ENCODE measurements at regions of chr12 and their contacts with region 1.

Region 1: GRCh38 chr12:79597910-79598309 is 92.9 kb downstream of the PAWR start:
- DNase-seq: no peak
- H3K4me3 ChIP-seq: no peak overlapping the region
- H3K27ac ChIP-seq: no peak overlapping the region
- H3K4me1 ChIP-seq: peaks cover 8% of the 10 kb centered on the region
- H3K27me3 ChIP-seq: no peaks in the 10 kb centered on the region
- CTCF ChIP-seq: no peak

Region 2: GRCh38 chr12:79508613-79509012 is 89.3 kb before region 1 on chr12:
- CTCF ChIA-PET with region 1: no interaction called
- dilution Hi-C with region 1: no loop called
- in situ Hi-C with region 1: no loop called
- intact Hi-C with region 1: no loop called
- DNase-seq: no peak
- H3K4me3 ChIP-seq: no peak overlapping the region
- H3K27ac ChIP-seq: no peak overlapping the region
- H3K4me1 ChIP-seq: no peaks in the 10 kb centered on the region
- H3K27me3 ChIP-seq: no peaks in the 10 kb centered on the region
- CTCF ChIP-seq: peak in 1 of 2 donors; percentile 15

Region 3: GRCh38 chr12:79634957-79635471 is 37.1 kb after region 1 on chr12:
- CTCF ChIA-PET with region 1: no interaction called
- dilution Hi-C with region 1: loop called (anchors 5 kb)
- in situ Hi-C with region 1: no loop called
- intact Hi-C with region 1: no loop called
- DNase-seq: peak; percentile 81
- H3K4me3 ChIP-seq: no peak overlapping the region
- H3K27ac ChIP-seq: peak overlapping the region; percentile 69
- H3K4me1 ChIP-seq: peaks cover 18% of the 10 kb centered on the region
- H3K27me3 ChIP-seq: no peaks in the 10 kb centered on the region
- CTCF ChIP-seq: no peak